ENCODE measurements at regions of chr16 and their contacts with region 1.

Region 1: GRCh38 chr16:53054670-53055485 is at the start of gene CHD9:
- DNase-seq: peak; percentile 83
- ATAC-seq: peak; percentile 88
- H3K4me3 Mint-ChIP-seq: peak within 1 kb of the TSS; percentile 77
- H3K27ac Mint-ChIP-seq: peak within 1 kb of the TSS; percentile 96
- H3K4me1 Mint-ChIP-seq: peaks cover 38% of the 10 kb centered on the region
- H3K27me3 Mint-ChIP-seq: peaks cover 10% of the 10 kb centered on the region; the same call in 1 of the 2 replicates
- CTCF ChIP-seq: peak; percentile 95
- total RNA-seq, gene CHD9: 29.8 to 34.3 TPM (median 31.3 TPM) in 3 replicates

Region 2: GRCh38 chr16:53041320-53042051 is 13.4 kb before region 1 on chr16:
- CTCF ChIA-PET with region 1: interaction called, 11 read pairs
- POLR2A ChIA-PET with region 1: interaction called, 5 read pairs
- DNase-seq: peak; percentile 31
- ATAC-seq: peak; percentile 38
- H3K4me3 Mint-ChIP-seq: peak overlapping the region; percentile 73
- H3K27ac Mint-ChIP-seq: peak overlapping the region; percentile 94
- H3K4me1 Mint-ChIP-seq: peaks cover 76% of the 10 kb centered on the region
- H3K27me3 Mint-ChIP-seq: peaks cover 35% of the 10 kb centered on the region
- CTCF ChIP-seq: no peak

Region 3: GRCh38 chr16:53091466-53092211 is 36.8 kb after region 1 on chr16:
- CTCF ChIA-PET with region 1: interaction called, 21 read pairs
- POLR2A ChIA-PET with region 1: no interaction called
- DNase-seq: peak; percentile 57
- ATAC-seq: peak; percentile 83
- H3K4me3 Mint-ChIP-seq: peak overlapping the region; percentile 55
- H3K27ac Mint-ChIP-seq: peak overlapping the region; percentile 99
- H3K4me1 Mint-ChIP-seq: peaks cover 63% of the 10 kb centered on the region
- H3K27me3 Mint-ChIP-seq: no peaks in the 10 kb centered on the region
- CTCF ChIP-seq: no peak

Region 4: DNA sequence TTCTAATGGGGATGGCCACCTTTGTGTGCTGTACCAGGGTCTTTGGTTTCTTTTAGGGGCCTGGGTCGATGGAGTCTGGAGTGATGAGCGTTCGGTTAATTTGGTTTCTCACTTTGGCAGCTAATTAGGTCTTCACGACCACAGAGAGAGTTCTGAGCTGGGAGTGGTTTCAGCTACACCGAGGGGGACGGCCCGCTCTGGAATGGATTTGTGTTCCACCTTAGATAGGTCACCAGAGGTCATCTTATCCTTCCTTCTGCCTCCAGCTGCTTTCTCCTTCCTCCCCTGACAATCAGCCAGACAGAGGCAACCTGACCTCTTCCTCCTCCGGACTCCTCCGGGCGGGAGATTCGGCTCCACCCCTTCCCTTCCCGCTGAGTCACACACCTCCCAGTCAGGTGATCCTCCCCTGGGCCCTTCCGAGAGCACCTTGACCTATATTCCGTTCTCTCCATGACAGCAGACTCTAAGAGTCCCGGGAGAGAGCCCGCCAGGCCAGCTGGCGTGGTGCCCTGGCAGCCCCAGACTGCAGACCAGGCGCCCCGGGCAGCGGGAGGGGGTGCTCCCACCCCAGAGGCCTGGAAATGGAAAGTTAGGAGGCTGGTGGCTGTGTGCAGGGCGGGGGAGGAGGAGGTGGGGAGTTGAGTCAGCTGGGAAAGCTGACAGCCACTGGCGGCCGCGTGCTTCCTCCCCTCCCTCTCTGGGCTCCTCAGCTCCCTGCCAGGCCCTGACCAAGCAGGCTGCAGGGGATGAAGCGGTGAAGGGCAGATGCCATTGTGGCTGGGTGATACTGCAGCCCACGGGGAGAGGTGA is 44.6 kb after region 1 on chr16:
- CTCF ChIA-PET with region 1: interaction called, 20 read pairs
- POLR2A ChIA-PET with region 1: interaction called, 11 read pairs
- DNase-seq: peak; percentile 92
- ATAC-seq: peak; percentile 86
- H3K4me3 Mint-ChIP-seq: peak overlapping the region; percentile 61
- H3K27ac Mint-ChIP-seq: peak overlapping the region; percentile 98
- H3K4me1 Mint-ChIP-seq: peaks cover 41% of the 10 kb centered on the region
- H3K27me3 Mint-ChIP-seq: no peaks in the 10 kb centered on the region
- CTCF ChIP-seq: no peak

Region 5: GRCh38 chr16:53130159-53131049 is 75.5 kb after region 1 on chr16:
- CTCF ChIA-PET with region 1: interaction called, 14 read pairs
- POLR2A ChIA-PET with region 1: interaction called, 4 read pairs
- DNase-seq: peak; percentile 95
- ATAC-seq: peak; percentile 89
- H3K4me3 Mint-ChIP-seq: peak overlapping the region; percentile 90
- H3K27ac Mint-ChIP-seq: peak overlapping the region; percentile 97
- H3K4me1 Mint-ChIP-seq: peaks cover 25% of the 10 kb centered on the region
- H3K27me3 Mint-ChIP-seq: peaks cover 2% of the 10 kb centered on the region; the same call in 1 of the 2 replicates
- CTCF ChIP-seq: peak; percentile 40; the same call in 1 of the 2 replicates

Region 6: DNA sequence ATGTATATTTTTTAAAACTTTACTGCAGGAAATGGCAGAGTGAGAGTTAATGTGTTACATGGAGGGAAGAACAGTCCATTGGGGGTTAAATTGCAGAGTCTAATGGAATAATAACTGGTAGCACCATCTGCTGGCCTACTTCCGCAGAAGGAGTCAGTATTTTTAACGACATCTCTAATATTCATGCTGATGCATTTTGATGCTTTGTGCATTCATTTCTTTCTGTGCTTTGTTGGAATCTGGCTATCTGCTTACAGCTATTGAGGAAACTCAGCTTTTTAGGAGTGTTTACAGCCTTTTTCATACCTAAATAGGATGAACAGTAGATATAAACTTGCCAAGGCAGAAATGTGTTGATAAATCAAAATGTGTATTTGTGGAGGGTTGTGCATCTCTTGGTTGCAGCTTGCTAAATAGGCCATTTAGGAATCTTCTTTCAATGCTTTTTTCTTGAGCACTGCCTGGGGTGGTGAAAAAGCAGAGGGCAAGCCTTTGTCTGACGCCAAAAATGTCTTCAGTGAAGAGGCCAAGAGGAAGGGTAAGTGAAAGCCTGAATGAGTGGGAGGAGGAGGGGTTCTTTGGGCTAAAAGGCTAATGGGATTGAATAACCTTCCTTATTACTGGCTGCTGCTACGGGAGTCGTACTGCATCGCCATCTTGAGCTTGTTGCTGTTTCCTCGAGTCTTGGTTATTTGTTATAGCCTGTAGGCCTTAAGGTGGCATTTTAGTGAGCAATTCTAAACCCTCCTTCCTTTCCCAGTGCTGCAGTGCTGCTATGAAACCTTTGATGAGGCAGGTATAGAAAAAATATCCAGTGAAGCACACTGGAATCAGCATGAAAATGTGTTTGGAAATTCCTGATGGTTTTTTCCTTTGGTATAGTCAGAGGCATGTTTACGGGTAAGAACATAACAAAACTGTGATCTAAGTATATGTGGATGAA is 153.2 kb after region 1 on chr16:
- CTCF ChIA-PET with region 1: interaction called, 17 read pairs
- POLR2A ChIA-PET with region 1: no interaction called
- DNase-seq: peak; percentile 29
- ATAC-seq: peak; percentile 98
- H3K4me3 Mint-ChIP-seq: peak overlapping the region; percentile 80
- H3K27ac Mint-ChIP-seq: peak overlapping the region; percentile 99
- H3K4me1 Mint-ChIP-seq: peaks cover 39% of the 10 kb centered on the region
- H3K27me3 Mint-ChIP-seq: no peaks in the 10 kb centered on the region
- CTCF ChIP-seq: no peak

Region 7: DNA sequence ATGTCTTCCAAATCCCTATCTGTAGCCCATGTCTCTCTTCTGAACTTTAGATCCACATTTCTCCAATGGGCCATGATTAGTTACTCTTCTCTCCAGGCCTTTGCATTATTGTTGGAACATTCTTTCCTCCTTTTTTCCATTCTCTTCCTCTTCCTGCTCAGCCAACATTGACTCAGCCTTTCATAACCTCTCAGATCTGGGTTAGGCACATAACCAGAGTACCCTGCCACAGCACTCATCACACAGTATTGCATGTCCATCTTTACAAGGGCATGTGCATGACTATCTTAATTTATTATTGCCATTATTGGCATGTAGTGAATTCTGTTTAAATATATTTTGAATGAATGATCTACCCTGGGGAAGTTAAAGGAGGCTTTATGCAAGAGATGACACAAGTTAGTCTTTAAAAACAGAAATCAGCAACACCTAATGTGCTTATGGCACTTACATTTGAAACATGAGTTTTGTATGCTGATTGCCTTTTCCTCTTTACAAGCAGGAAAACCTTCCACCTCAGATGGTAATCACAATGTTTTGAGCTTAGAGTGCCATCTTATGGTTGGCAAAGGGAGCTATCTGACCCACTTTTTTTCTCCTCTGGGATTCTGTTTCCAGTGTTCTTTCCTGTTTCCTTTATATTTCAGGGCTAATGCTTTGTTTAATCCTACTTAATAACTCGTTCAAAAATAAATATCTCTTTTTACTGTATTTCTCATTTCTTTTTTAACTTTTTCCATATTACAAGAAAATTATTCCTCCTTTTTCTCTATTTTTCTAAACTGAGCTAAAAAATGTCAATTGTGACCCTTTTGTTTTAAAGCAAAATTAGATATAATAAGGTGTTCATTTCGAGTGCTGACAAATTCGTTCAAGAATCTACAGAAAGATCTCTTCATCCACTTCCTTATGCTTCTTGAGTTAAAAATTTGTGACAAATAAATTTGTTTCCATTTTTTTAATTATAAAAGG is 228.4 kb after region 1 on chr16:
- CTCF ChIA-PET with region 1: interaction called, 15 read pairs
- POLR2A ChIA-PET with region 1: interaction called, 5 read pairs
- DNase-seq: no peak
- ATAC-seq: peak; percentile 48
- H3K4me3 Mint-ChIP-seq: no peak overlapping the region
- H3K27ac Mint-ChIP-seq: no peak overlapping the region
- H3K4me1 Mint-ChIP-seq: no peaks in the 10 kb centered on the region
- H3K27me3 Mint-ChIP-seq: no peaks in the 10 kb centered on the region
- CTCF ChIP-seq: no peak